Activated CD4-positive, alpha-beta memory T cell treated with anti-CD3 and anti-CD28 coated beads, Interleukin-2, amount 10 ng/mL, durations not matched to agents 7 days and 5 days (primary cell): ENCODE measurements at regions of chr19 and their contacts with region 1.

Region 1: GRCh38 chr19:29724102-29724641 is 9.1 kb upstream of the C19orf12 start:
- DNase-seq: no peak
- H3K4me3 Mint-ChIP-seq: no peak overlapping the region
- H3K27ac Mint-ChIP-seq: no peak overlapping the region
- H3K4me1 Mint-ChIP-seq: peaks cover 6% of the 10 kb centered on the region
- H3K27me3 Mint-ChIP-seq: peaks cover 44% of the 10 kb centered on the region

Region 2: GRCh38 chr19:29636553-29637360 is 87.4 kb before region 1 on chr19:
- CTCF ChIA-PET with region 1: no interaction called
- POLR2A ChIA-PET with region 1: no interaction called
- DNase-seq: no peak
- H3K4me3 Mint-ChIP-seq: no peak overlapping the region
- H3K27ac Mint-ChIP-seq: no peak overlapping the region
- H3K4me1 Mint-ChIP-seq: no peaks in the 10 kb centered on the region
- H3K27me3 Mint-ChIP-seq: peaks cover 7% of the 10 kb centered on the region

Region 3: GRCh38 chr19:29735800-29736199 is 11.6 kb after region 1 on chr19:
- CTCF ChIA-PET with region 1: interaction called, 11 read pairs
- POLR2A ChIA-PET with region 1: no interaction called
- DNase-seq: no peak
- H3K4me3 Mint-ChIP-seq: no peak overlapping the region
- H3K27ac Mint-ChIP-seq: no peak overlapping the region
- H3K4me1 Mint-ChIP-seq: no peaks in the 10 kb centered on the region
- H3K27me3 Mint-ChIP-seq: peaks cover 3% of the 10 kb centered on the region